Posterior cingulate gyrus (tissue), 11 donors: ENCODE measurements at regions of chr14 and their contacts with region 1.

Region 1: DNA sequence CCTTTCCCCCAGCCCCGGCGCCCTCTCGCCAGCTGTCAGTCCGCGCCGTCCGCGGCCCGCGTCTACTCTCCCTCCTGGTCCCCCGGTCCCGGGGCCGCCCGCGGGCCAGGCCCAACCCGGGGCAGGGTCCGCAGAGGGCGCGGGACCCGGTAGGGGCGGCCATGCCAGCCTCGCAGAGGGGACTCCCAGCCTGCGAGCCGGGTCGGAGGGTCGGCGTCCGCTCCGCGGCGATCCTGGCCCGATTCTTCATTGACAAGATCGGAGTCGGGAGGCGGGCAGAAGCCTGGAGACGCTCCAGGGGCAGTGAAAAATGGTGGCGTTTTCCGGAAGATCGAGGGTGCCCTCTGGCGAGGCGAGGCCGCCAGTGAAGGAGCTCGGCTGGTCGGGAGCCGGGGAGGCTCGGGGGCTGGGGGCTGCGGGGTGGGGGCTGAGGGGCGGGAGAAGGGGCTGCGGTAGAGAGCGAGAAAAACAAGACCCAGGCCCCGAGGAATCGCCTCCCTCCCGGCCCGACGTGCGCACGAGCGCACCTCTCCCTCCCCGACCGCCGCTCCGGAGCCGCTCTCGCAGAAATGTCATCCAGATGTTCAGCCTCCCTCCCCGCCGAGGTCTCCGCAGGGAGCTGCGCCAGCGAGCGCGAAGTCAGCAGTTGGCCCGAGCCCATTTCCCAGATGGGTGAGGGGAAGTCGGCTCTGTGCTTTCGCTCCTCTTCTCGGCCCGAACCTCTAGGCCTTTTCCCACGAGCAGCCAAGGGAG is 647 bp upstream of the TGFB3 start:
- DNase-seq: peak; percentile 77 to 97 (median 84)

Region 2: DNA sequence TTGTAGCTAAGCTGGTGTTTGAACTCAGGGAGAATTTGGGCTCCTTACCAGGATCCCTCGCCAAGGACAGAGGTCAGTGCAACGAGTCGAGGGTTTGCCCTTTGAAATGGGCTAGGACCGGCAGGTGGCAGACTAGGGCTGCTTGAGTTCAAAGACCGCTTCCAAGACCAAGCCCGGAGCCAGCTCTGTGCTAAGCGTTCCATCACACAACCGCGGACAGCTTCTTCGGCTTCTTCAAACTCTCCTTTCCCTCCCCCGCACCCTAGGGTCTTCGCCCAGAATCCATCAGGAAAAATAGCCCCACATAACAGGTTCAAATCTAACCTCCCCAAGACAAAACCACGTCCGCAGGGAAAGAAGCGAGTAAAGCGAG is 404.7 kb before region 1 on chr14:
- intact Hi-C with region 1: loop called (anchors 5 kb)
- DNase-seq: peak; percentile 57 to 96 (median 80)

Region 3: DNA sequence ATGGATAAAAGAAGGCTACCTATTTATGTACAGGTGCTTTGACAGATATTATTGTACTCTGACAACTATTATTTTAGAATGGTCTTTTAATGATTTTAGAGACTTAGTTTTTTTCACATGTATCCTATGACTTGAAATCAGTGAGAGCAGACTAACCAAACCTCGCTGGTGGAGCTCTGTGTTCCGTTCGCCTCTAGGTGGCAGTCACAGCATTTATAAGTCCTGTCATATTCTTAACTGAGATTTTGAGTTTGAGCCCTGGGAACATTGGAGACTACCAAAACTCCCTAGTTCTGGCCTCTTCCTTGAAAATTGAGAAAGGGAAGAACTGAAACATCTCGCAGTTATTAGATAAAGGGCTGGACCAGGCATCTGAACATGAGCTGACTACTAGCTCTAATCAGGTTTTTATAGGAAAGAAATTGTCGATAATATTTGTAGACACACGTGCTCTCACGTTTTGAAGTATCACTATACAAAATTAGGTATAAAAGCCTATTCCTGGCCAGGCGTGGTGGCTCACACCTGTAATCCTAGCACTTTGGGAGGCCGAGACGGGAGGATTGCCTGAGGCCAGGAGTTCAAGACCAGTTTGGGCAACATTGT is 273.1 kb before region 1 on chr14:
- intact Hi-C with region 1: loop called (anchors 1 kb)
- DNase-seq: peak; percentile 43 to 94 (median 76)

Region 4: DNA sequence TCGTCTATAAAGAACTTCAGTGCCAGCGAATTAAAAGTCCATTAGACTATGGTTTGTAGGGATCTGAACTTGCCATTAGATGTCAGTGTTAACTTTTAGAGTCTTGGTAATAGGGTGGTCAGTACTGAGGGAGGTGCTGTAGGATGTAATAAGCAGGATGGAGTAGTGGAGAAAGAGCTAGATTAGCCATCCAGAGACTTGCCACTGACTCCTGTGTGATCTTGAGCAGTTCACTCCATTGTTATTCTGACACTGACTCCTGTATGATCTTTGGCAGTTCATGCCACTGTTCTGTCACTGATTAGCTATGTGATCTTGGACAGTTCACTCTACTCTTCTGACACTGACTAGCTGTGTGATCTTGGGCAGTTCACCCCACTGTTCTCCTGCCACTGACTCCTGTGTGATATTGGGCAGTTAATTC is 187.8 kb before region 1 on chr14:
- intact Hi-C with region 1: loop called (anchors 1 kb)
- DNase-seq: no peak

Region 5: DNA sequence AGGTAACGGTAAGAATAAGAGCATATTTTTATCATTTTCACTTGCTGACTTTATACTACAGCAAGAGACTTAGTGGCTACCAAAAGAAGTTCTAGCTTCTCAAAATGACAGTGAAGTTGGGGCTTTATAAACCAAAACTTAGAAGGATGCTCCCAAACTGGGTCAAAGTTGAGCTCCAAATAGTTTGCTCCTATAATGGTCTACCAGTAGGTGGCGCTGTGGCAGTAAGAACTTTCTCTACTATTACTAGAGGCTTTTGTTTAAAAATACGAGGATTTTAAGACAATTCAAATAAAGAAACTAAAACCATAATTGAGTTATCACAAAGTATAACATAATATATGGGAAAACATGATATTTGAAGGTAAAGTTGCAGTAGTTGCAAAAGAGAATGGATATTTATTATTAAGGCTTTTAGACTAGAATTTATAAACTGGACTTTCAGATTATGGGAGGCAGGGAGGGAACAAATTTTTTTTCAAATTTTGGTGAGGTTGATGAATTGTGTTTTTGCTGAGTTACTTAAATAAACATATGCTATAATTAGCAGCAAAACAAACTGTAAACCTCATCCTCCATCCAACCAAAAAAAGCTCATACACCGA is 75.7 kb before region 1 on chr14:
- intact Hi-C with region 1: loop called (anchors 2 kb)
- DNase-seq: peak in 5 of 10 donors; percentile 52 to 83 (median 76)

Region 6: DNA sequence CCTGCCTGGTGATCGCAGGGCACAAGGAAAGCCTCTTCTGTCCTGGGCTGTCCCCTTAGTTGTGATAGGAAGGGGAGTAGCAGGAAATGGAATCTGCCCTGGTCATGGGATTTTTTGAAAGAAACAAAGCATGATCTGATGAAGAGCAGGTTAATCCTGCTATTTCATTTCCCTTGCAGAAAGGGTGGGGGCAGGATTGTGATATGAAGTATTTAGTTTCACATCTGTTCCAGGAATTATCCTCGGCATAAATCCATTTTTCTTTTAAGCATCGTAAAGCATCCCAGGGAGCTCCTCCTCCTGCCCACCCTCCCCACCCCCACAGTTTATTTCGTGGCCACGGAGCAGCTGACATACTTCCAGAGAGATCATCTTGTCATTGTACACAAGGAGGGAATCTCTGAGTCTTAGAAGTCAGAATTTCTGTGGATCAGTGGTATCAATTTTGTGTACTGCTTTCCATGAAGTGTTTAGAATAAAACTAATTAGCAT is 53.7 kb before region 1 on chr14:
- intact Hi-C with region 1: no loop called
- DNase-seq: no peak